ENCODE measurements at regions of chr16 and their contacts with region 1.

Region 1: DNA sequence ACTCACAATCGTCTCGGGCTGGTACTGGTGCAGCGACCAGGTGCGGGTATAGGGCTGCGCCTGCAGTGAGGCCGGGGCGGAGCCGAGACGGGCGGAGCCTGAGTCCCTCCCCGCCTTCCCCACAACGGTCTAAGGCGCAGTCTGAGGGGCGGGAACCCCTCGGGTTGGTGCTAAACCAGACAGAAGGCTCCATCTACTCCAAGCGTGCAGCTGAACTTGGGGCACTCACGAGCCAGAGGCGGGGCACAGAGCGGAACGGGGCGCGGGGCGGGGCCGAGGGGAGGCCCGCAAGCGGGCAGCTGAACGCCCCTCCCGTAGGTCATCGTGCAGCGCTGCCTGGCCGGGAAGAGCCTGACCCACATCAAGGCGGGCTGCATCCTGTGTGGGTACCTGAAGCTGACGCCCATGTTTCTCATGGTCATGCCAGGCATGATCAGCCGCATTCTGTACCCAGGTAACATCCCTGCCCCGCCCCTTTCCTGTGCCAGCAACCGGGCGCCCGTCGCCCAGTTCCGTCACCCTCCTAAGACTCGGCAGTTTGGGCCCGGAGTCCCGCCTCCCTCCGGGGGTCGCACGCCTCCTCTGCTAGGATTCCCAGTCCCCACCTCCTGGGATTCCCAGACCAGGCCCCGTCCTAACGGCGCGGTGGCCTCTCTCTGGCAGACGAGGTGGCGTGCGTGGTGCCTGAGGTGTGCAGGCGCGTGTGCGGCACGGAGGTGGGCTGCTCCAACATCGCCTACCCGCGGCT is 5.0 kb downstream of the SLC5A2 start:
- DNase-seq: peak; percentile 93
- H3K4me3 ChIP-seq: peak overlapping the region; percentile 47 to 79 (median 63)
- H3K27ac ChIP-seq: peak overlapping the region in 5 of 8 donors; percentile 11 to 78 (median 57)
- H3K4me1 ChIP-seq: peaks cover 8 to 27% (median 21%) of the 10 kb centered on the region in 6 donors
- H3K27me3 ChIP-seq: peaks cover 0 to 51% (median 12%) of the 10 kb centered on the region in 7 donors
- CTCF ChIP-seq: no peak
- POLR2A ChIP-seq: no peak

Region 2: DNA sequence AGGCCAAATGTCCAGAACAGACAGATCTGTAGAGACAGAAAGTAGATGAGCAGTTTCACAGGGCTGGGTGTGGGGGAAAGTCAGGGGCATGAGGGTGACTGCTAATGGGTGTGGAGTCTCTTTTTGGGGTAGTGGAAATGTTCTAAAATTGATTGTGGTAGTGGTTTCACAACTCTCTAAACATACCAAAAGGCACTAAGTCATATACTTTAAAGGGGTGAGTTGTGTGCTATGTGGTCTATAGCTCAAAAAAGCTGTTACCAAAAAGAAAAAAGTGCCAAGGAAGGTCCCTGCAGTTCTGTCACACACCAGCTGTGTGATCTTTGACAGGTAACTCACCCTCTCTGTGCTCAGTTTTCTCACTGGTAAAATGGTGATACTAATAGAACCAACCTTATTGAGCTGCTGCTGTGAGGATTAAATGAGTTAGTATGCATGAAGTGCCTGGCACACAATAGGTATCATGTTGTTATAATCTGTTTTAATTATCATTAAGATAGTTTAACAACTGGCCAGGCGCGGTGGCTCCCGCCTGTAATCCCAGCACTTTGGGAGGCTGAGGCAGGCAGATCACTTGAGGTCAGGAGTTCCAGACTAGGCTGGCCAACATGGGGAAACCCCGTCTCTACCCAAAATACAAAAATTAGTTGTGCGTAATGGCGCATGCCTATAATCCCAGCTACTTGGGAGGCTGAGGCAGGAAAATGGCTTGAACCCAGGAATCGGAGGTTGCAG is 122.6 kb before region 1 on chr16:
- intact Hi-C with region 1: no loop called
- DNase-seq: no peak
- H3K4me3 ChIP-seq: no peak overlapping the region
- H3K27ac ChIP-seq: peak overlapping the region in 2 of 8 donors; percentile 23 to 37
- H3K4me1 ChIP-seq: peaks cover 0 to 61% (median 16%) of the 10 kb centered on the region in 6 donors
- H3K27me3 ChIP-seq: no peaks in the 10 kb centered on the region
- CTCF ChIP-seq: no peak
- POLR2A ChIP-seq: no peak

Region 3: GRCh38 chr16:31713071-31713944 is 225.4 kb after region 1 on chr16:
- intact Hi-C with region 1: loop called (anchors 10 kb)
- DNase-seq: peak; percentile 94
- H3K4me3 ChIP-seq: peak overlapping the region; percentile 59 to 91 (median 86)
- H3K27ac ChIP-seq: peak overlapping the region; percentile 93 to 97 (median 96)
- H3K4me1 ChIP-seq: peaks cover 17 to 43% (median 28%) of the 10 kb centered on the region in 6 donors
- H3K27me3 ChIP-seq: no peaks in the 10 kb centered on the region
- CTCF ChIP-seq: peak in 2 of 11 experiments; percentile 17 to 21
- POLR2A ChIP-seq: peak; percentile 41 to 77 (median 70)

Measured in spleen (tissue), 13 donors.